ENCODE measurements at regions of chr14 and their contacts with region 1.

Region 1: DNA sequence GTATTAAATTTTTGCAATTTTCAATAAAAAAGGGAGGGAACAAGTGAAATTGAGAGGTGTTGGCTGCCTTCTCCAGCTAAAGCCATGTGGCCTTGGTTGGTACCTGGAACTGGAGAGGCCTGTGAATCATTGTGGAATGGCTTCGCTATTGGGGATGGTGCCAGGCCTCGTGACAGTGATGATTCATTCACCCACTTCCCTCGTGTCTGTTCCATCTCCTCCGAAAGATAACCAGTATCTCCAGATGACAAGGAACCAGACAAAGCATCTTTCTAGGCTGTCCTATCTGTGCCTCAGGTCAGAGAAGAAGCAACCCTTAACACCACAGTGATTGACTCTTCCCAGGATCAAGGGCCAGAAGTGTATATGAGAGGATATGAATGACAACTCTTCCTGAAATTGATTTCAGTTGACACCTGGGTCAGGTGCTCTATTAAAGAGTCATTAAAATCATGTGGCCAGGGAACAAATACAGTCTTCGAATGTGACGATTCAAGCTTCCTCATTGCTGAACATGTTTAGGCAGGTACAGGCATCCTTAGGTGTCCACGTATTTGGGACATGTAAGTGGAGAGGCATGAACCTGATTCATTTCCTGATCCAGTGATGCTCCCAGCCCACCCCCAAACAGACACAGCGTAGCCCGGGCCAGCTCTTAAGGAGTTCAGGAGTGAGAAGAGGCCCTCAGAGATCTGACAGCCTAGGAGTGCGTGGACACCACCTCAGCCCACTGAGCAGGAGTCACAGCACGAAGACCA is at the start of gene RNASE7:
- DNase-seq: no peak
- H3K4me3 ChIP-seq: no peak within 1 kb of the TSS
- H3K27ac ChIP-seq: no peak within 1 kb of the TSS
- H3K4me1 ChIP-seq: peaks cover 0 to 4% of the 10 kb centered on the region in 2 donors
- H3K27me3 ChIP-seq: no peaks in the 10 kb centered on the region
- CTCF ChIP-seq: no peak
- POLR2A ChIP-seq: no peak
- total RNA-seq, gene RNASE7: not detected

Region 2: DNA sequence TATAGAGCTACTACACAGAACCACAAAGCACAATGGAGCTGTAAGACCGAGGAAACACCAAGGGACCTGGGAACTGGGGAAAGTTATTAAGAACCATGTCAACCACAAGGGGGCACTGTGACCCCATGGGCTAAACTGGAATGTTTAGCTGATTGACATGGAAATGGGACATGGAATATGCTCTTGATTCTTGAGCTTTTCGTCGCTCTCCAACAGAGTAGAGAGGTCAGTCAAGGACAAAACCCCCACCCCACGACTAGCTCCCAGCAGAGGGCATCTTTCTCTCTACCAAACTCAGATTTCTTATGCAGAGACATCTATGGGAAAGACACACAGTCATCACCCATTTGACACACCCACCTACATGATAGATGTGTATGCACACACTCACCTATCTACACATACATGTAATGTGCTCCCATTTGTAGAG is 27.1 kb before region 1 on chr14:
- intact Hi-C with region 1: loop called (anchors 2 kb)
- DNase-seq: peak; percentile 85 to 91
- H3K4me3 ChIP-seq: no peak overlapping the region
- H3K27ac ChIP-seq: peak overlapping the region; percentile 41 to 61
- H3K4me1 ChIP-seq: peaks cover 3 to 4% of the 10 kb centered on the region in 2 donors
- H3K27me3 ChIP-seq: no peaks in the 10 kb centered on the region
- CTCF ChIP-seq: peak; percentile 96 to 98 (median 97)
- POLR2A ChIP-seq: no peak

Region 3: DNA sequence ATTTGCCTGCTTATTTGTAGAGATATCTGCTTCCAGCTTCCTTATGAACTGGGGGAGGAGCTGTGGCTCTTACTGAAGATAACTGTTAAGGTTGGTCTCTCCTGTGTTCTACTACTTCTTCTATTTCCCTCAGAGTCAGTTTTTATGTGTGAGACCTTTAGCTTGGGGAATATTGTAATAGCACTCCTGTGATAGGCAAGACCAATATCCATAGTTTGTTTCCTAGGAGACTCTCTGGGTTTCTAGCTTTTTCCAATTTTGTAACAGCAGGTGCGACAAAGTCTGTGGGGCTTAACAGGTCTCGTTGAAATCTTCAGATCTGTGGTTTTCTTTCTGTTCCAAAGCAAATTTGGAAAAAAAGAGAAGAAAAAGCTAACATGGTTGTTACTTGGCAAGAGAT is 538.1 kb after region 1 on chr14 and contains the start of gene OR10G3:
- intact Hi-C with region 1: no loop called
- DNase-seq: no peak
- H3K4me3 ChIP-seq: no peak within 1 kb of the TSS
- H3K27ac ChIP-seq: no peak within 1 kb of the TSS
- H3K4me1 ChIP-seq: no peaks in the 10 kb centered on the region
- H3K27me3 ChIP-seq: no peaks in the 10 kb centered on the region
- CTCF ChIP-seq: no peak
- POLR2A ChIP-seq: no peak
- total RNA-seq, gene OR10G3: not detected